Endothelial cell of umbilical vein (primary cell): ENCODE measurements at regions of chr18 and their contacts with region 1.

Region 1: GRCh38 chr18:75280427-75281280 is 70.1 kb downstream of the TSHZ1 start:
- DNase-seq: peak; percentile 94
- H3K4me3 ChIP-seq: peak overlapping the region in 2 of 3 experiments; percentile 24 to 40
- H3K27ac ChIP-seq: peak overlapping the region; percentile 86
- H3K4me1 ChIP-seq: peaks cover 29% of the 10 kb centered on the region
- H3K27me3 ChIP-seq: no peaks in the 10 kb centered on the region
- CTCF ChIP-seq: no peak
- POLR2A ChIP-seq: no peak

Region 2: GRCh38 chr18:75070625-75071483 is 209.8 kb before region 1 on chr18:
- CTCF ChIA-PET with region 1: no interaction called
- POLR2A ChIA-PET with region 1: no interaction called
- dilution Hi-C with region 1: no loop called
- intact Hi-C with region 1: loop called (anchors 2 kb)
- DNase-seq: peak; percentile 94
- H3K4me3 ChIP-seq: peak overlapping the region in 1 of 3 experiments; percentile 45
- H3K27ac ChIP-seq: peak overlapping the region; percentile 99
- H3K4me1 ChIP-seq: peaks cover 44% of the 10 kb centered on the region
- H3K27me3 ChIP-seq: no peaks in the 10 kb centered on the region
- CTCF ChIP-seq: no peak
- POLR2A ChIP-seq: peak; percentile 68

Region 3: DNA sequence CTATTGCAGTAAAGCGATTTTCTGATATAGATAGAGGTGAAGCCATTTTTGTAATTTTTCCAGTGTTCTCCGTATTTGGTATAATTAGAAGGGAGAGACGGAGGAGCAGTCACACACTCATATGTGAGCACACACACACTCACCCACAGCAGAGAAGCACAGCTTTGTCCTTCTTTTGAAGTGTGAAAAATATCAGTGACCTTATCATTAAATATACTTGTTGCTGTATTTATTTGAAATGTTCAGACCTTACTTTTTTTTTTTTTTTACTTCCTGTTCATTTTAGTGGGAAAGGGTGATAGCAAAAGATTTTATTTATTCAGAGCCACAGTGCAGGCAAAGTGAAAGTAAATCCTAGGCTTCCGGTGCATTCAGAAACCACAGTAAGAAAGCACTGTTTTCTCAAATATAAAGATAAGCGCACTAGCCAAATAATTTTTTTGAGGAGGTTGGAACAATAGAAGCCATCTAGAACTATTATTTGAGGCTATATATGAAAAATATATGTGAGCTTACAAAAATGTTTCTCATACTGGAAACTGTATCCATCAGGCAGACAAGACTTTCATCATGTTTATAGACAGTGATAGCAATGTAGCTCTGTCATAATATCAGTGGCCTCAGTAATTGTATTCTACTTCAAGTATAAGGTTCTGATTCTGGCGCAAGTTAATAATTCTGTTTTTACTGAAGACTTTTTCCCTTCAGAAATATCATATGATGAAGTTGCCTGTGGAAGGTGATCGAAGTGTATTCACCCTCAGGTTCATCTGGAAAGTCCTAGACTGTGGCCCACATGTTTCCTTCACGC is 32.8 kb before region 1 on chr18:
- CTCF ChIA-PET with region 1: interaction called, 4 read pairs
- POLR2A ChIA-PET with region 1: no interaction called
- dilution Hi-C with region 1: no loop called
- intact Hi-C with region 1: loop called (anchors 1 kb)
- DNase-seq: peak; percentile 86
- H3K4me3 ChIP-seq: peak overlapping the region; percentile 8 to 79 (median 61)
- H3K27ac ChIP-seq: peak overlapping the region; percentile 78
- H3K4me1 ChIP-seq: peaks cover 27% of the 10 kb centered on the region
- H3K27me3 ChIP-seq: no peaks in the 10 kb centered on the region
- CTCF ChIP-seq: no peak
- POLR2A ChIP-seq: no peak

Region 4: DNA sequence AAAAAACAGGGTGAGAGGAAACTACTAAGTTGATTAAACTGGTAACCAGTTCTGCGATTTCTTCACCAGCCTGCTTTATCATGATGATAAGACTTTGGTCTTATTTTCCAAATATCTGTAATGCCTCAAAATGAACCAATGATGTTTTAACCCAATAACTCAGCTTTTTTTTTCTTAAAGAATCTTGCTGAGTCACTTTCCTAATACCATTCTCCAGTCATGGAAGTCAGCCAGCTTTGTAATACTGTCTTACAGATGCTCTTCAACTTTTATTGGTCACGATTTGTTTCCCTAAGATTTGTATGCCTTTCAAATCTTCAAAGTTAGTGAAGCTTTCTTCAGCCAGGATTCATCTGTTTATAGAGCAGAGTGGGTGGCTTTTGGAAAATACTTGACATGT is 194.6 kb after region 1 on chr18:
- CTCF ChIA-PET with region 1: no interaction called
- POLR2A ChIA-PET with region 1: no interaction called
- dilution Hi-C with region 1: no loop called
- intact Hi-C with region 1: no loop called
- DNase-seq: peak; percentile 43
- H3K4me3 ChIP-seq: no peak overlapping the region
- H3K27ac ChIP-seq: no peak overlapping the region
- H3K4me1 ChIP-seq: peaks cover 4% of the 10 kb centered on the region
- H3K27me3 ChIP-seq: no peaks in the 10 kb centered on the region
- CTCF ChIP-seq: no peak
- POLR2A ChIP-seq: no peak